A673 (cell line): ENCODE measurements at regions of chr2 and their contacts with region 1.

Region 1: DNA sequence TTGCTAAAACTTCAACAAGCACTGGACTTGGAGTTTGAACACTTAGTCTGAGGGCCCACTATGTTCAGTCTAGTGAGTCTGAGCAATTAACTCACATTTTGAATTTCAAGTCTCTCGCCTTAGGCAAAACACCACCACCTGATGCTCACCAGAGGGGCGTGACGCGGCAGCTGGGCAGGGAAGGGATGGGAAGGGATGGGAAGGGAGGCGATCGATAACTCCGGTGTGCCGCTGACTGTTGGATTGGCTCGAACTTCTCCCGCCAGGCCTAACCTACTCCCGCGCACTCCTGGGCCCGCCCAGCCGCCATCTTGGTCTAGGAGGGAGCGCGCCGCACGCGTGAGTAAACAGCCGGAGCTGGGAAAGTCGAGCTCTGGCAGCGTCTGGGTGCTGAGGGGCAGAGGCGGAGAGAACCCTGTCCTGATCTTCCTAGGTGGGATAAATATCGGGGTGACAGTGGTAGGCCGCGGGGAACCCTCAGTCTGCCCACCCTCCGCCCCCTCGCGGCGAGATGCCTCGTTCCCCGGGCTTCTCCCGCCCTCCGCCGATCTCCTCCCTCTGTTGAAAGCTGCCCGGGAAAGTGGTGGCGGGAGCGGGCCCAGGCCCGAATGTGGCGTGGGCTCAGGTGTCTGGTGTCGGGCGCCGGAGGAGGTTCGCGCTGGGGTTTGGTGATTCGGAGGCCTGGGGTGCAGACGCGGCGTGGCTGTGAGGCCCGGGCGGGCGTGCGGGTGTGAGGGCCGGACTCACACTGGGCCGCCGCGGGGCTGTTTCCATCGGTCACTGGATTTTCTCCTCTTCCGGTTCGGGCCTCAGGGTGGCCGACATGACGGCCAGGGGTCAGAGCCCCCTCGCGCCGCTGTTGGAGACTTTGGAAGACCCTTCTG is at the start of gene RIF1:
- DNase-seq: peak; percentile 98
- H3K4me3 ChIP-seq: peak within 1 kb of the TSS; percentile 90
- H3K27ac ChIP-seq: peak within 1 kb of the TSS; percentile 95
- H3K4me1 ChIP-seq: peaks cover 7% of the 10 kb centered on the region
- H3K27me3 ChIP-seq: no peaks in the 10 kb centered on the region
- CTCF ChIP-seq: peak; percentile 77
- total RNA-seq, gene RIF1: 111 and 112 TPM in 2 replicates

Region 2: DNA sequence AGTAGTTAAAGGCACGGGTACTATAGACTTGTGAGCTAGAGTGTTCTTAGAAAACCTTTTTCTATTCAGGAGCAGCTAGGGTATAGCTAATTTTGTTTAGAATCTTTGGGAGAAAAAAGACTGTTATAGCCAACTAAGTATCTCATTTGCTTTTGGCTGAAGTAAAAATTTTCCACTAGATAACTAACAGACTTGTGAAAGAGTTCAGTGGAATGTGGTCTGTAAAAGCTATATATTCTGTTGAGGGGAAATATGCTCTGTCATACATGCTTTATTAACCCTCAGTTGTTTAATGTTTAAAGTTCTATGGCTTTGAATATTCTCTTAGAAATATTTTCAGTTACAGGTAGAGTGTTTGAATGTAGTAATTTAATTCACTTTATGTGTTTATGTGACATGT is 49.5 kb after region 1 on chr2:
- CTCF ChIA-PET with region 1: interaction called, 17 read pairs
- POLR2A ChIA-PET with region 1: no interaction called
- intact Hi-C with region 1: loop called (anchors 5 kb)
- DNase-seq: no peak
- H3K4me3 ChIP-seq: no peak overlapping the region
- H3K27ac ChIP-seq: peak overlapping the region; percentile 27
- H3K4me1 ChIP-seq: no peaks in the 10 kb centered on the region
- H3K27me3 ChIP-seq: no peaks in the 10 kb centered on the region
- CTCF ChIP-seq: no peak